SK-N-SH (cell line): ENCODE measurements at regions of chr22 and their contacts with region 1.

Region 1: DNA sequence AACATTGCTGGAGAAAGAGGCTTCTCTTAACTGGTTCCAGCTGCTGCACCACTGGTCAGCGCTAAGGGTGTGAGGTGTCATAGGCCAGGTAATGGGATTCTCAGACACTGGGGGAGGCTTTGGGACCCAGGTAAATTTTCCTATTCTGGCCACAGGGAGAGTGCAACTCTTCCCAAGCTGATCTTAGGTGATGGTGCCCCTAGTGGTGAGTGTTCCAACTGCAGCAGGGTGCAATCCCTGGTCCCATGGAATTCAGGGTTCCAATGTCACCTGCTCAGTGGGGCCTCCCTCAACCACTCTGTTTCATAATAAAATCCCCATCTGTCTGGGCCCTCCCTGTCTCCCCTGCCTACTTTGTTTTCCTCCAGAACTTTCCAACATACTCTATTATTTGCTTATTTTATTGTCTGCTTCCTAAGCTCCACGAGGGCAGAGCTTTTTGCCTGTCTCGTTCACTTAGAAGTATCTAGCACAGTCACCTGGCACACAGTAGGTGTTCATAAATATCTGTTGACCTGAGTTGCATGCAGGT is 2.9 kb upstream of the SGSM1 start:
- DNase-seq: peak; percentile 78
- H3K4me3 ChIP-seq: peak overlapping the region in 1 of 2 experiments; percentile 36; a peak in 1 of 4 replicates
- H3K27ac ChIP-seq: no peak overlapping the region
- H3K4me1 ChIP-seq: peaks cover 0 to 12% of the 10 kb centered on the region in 2 experiments; a peak in 2 of 4 replicates
- H3K27me3 ChIP-seq: no peaks in the 10 kb centered on the region
- CTCF ChIP-seq: peak; percentile 88
- EP300 ChIP-seq: no peak
- RAD21 ChIP-seq: peak; percentile 58

Region 2: DNA sequence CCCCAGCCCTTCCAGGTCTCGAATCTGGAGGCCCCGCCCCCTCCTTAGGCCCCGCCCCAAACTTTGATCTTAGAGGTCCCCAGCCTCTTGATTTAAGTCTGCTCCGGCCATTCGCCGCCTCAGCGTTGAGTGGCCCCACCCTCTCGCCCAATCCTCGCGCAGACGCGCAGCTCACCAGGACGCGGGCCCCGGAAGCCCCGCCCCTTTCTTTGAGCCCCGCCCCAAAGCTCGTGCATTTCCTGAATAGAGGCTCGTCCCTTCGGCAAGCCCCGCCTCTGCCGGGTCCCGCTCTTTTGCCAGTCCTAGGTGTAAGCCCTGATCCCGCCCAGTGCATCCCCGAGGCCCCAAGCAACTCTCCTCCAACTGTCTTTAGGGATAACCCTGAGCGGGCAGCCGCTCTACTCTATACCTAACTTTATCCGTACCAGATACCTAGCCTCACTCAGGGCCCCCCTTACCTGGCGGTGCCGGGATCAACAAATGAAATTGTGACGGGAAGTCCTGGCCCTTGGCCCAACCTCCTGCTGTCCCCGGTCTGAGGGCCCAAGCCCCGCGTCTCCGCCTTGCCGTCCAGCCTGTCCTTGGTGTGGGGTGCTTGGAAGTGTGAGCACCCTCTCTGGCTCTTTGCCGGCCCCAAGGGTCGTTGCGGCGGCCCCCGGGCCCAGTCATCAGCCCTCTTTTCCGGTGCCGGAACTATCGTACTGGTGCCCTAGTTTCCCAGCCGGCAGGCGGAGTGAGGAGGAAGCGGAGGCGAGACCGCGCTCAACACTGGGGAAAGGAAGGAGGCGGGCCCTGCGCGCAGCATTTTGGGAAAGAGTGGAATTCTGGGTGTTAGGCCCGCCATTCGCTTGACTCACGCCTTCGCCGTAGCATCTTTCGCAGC is 247.7 kb before region 1 on chr22 and contains the start of gene SNRPD3:
- CTCF ChIA-PET with region 1: no interaction called
- POLR2A ChIA-PET with region 1: no interaction called
- DNase-seq: peak; percentile 99
- H3K4me3 ChIP-seq: peak within 1 kb of the TSS; percentile 97 to 99
- H3K27ac ChIP-seq: peak within 1 kb of the TSS; percentile 97 to 98
- H3K4me1 ChIP-seq: peaks cover 16 to 23% of the 10 kb centered on the region in 2 experiments; a peak in 3 of 4 replicates
- H3K27me3 ChIP-seq: no peaks in the 10 kb centered on the region
- CTCF ChIP-seq: no peak
- EP300 ChIP-seq: no peak
- RAD21 ChIP-seq: no peak
- polyA plus RNA-seq, gene SNRPD3: 177 and 212 TPM in 2 replicates

Region 3: DNA sequence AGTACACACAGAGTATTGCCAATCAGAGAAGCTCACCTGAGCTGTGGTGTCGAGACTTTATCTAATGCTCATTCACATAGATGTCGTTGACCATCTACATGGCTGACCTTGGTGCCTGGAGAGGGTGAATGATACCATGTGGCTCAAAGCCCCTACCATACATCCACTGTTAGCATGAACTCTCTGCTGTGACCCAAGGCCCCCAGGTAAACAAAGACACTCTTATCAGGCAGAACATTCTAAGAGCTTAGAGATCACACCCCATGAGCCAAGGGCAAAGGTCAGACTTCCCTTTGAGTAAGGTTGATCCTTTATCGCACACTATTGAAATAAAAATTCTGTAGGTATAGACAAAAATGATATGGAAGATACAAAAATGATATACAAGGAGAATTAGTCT is 13.6 kb before region 1 on chr22:
- CTCF ChIA-PET with region 1: interaction called, 45 read pairs
- POLR2A ChIA-PET with region 1: no interaction called
- DNase-seq: no peak
- H3K4me3 ChIP-seq: no peak overlapping the region
- H3K27ac ChIP-seq: no peak overlapping the region
- H3K4me1 ChIP-seq: no peaks in the 10 kb centered on the region; a peak in 1 of 4 replicates
- H3K27me3 ChIP-seq: no peaks in the 10 kb centered on the region
- CTCF ChIP-seq: no peak
- EP300 ChIP-seq: no peak
- RAD21 ChIP-seq: no peak

Region 4: GRCh38 chr22:24819911-24820461 is 16.9 kb after region 1 on chr22:
- CTCF ChIA-PET with region 1: interaction called, 36 read pairs
- POLR2A ChIA-PET with region 1: interaction called, 3 read pairs
- DNase-seq: peak; percentile 62
- H3K4me3 ChIP-seq: no peak overlapping the region
- H3K27ac ChIP-seq: peak overlapping the region in 1 of 2 experiments; percentile 48; a peak in 2 of 4 replicates
- H3K4me1 ChIP-seq: peaks cover 0 to 23% of the 10 kb centered on the region in 2 experiments; a peak in 1 of 4 replicates
- H3K27me3 ChIP-seq: no peaks in the 10 kb centered on the region
- CTCF ChIP-seq: no peak
- EP300 ChIP-seq: no peak
- RAD21 ChIP-seq: no peak

Region 5: DNA sequence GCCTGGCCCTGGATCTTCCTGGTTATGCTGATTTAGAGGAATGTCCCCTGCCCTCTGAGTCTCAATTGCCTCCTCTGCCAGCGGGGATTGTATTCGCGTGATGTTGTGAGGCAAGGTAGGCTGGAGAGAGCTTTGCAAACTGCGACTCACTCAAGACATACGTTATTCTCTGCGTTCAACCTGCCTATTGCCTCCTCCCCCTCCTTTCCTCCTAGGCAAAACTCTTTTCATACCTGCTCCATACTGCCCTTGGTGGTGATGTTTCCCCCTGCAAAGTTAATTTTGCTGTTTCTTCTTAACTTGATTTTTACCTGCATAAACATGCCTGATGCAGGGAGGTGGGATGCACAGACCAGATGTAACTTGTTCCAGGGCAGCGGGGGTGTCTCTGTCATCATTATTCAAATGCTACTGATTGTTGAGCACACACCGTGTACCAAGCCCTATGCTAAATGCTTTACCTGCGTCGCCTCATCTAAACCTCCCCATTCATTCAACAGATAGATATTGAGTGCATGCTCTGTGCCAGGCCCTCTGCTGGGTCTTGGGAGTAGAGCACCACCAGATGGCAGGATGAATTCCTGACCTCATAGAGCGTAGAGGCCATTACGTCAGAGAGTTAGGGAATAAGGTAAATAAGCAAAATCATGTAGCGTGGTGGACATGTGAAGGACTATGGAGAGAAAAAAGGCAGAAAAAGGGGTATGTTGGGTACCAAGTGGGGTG is 31.9 kb after region 1 on chr22:
- CTCF ChIA-PET with region 1: interaction called, 33 read pairs
- POLR2A ChIA-PET with region 1: no interaction called
- DNase-seq: peak; percentile 64
- H3K4me3 ChIP-seq: no peak overlapping the region
- H3K27ac ChIP-seq: no peak overlapping the region
- H3K4me1 ChIP-seq: peaks cover 0 to 12% of the 10 kb centered on the region in 2 experiments; a peak in 1 of 4 replicates
- H3K27me3 ChIP-seq: no peaks in the 10 kb centered on the region
- CTCF ChIP-seq: peak; percentile 34
- EP300 ChIP-seq: no peak
- RAD21 ChIP-seq: peak; percentile 73